Activated B cell treated with CpG ODN at 0.5 μM for 24 hours (primary cell): ENCODE measurements at regions of chr1 and their contacts with region 1.

Region 1: GRCh38 chr1:204506961-204507387 is 9.2 kb upstream of the MDM4 start:
- DNase-seq: peak; percentile 66
- ATAC-seq: peak; percentile 62
- H3K4me3 Mint-ChIP-seq: peak overlapping the region; percentile 91
- H3K27ac Mint-ChIP-seq: peak overlapping the region; percentile 99
- H3K4me1 Mint-ChIP-seq: peaks cover 74% of the 10 kb centered on the region
- H3K27me3 Mint-ChIP-seq: peaks cover 5% of the 10 kb centered on the region
- CTCF ChIP-seq: no peak

Region 2: GRCh38 chr1:204162231-204163074 is 344.5 kb before region 1 on chr1:
- CTCF ChIA-PET with region 1: interaction called, 3 read pairs
- POLR2A ChIA-PET with region 1: interaction called, 3 read pairs
- intact Hi-C with region 1: loop called (anchors 2 kb)
- DNase-seq: peak; percentile 71
- ATAC-seq: peak; percentile 98
- H3K4me3 Mint-ChIP-seq: no peak overlapping the region
- H3K27ac Mint-ChIP-seq: no peak overlapping the region
- H3K4me1 Mint-ChIP-seq: no peaks in the 10 kb centered on the region
- H3K27me3 Mint-ChIP-seq: peaks cover 20% of the 10 kb centered on the region
- CTCF ChIP-seq: peak; percentile 60

Region 3: GRCh38 chr1:204198151-204198994 is 308.6 kb before region 1 on chr1:
- CTCF ChIA-PET with region 1: no interaction called
- POLR2A ChIA-PET with region 1: no interaction called
- intact Hi-C with region 1: no loop called
- DNase-seq: no peak
- ATAC-seq: no peak
- H3K4me3 Mint-ChIP-seq: no peak overlapping the region
- H3K27ac Mint-ChIP-seq: no peak overlapping the region
- H3K4me1 Mint-ChIP-seq: no peaks in the 10 kb centered on the region
- H3K27me3 Mint-ChIP-seq: peaks cover 10% of the 10 kb centered on the region
- CTCF ChIP-seq: no peak

Region 4: DNA sequence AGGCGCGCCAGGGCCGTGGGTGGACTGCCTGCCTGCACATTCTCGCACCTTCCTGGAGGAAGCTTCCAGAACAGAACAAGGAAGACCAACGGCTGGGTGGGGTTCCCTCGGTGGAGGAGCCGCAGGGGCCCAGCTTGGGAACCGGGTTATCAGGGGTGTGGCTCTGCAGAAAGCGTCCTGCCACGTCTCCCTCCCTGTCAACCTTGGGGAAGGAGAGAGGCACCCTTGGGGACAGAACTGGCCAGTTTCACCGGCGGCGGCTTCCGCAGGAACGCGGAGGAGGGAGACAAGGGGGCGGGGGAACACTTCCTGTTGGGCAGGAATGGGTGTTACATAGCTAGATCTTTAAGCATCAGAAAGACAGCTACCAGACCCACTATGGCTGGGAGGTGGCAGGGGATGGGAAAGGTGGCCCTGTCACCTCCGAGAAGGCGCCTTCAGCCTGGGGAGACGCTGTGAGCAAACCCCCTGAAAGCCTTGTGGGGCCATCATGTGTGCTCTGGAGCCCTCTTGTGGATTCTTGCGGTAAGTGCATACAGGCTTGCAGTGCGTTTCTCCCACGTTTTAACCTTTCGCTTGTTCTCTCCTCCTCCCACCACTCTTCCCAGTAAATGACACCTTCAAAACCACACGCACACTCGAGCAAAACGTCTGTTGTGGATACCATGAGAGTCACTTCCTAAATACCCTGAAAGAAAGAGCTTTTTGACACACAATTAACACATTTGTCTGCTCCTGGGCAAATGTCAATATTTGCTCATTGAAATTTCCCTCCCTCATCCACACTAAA is 143.4 kb before region 1 on chr1:
- CTCF ChIA-PET with region 1: interaction called, 4 read pairs
- POLR2A ChIA-PET with region 1: no interaction called
- intact Hi-C with region 1: loop called (anchors 2 kb)
- DNase-seq: peak; percentile 54
- ATAC-seq: peak; percentile 91
- H3K4me3 Mint-ChIP-seq: peak overlapping the region; percentile 77
- H3K27ac Mint-ChIP-seq: no peak overlapping the region
- H3K4me1 Mint-ChIP-seq: peaks cover 3% of the 10 kb centered on the region
- H3K27me3 Mint-ChIP-seq: peaks cover 45% of the 10 kb centered on the region
- CTCF ChIP-seq: peak; percentile 19

Region 5: DNA sequence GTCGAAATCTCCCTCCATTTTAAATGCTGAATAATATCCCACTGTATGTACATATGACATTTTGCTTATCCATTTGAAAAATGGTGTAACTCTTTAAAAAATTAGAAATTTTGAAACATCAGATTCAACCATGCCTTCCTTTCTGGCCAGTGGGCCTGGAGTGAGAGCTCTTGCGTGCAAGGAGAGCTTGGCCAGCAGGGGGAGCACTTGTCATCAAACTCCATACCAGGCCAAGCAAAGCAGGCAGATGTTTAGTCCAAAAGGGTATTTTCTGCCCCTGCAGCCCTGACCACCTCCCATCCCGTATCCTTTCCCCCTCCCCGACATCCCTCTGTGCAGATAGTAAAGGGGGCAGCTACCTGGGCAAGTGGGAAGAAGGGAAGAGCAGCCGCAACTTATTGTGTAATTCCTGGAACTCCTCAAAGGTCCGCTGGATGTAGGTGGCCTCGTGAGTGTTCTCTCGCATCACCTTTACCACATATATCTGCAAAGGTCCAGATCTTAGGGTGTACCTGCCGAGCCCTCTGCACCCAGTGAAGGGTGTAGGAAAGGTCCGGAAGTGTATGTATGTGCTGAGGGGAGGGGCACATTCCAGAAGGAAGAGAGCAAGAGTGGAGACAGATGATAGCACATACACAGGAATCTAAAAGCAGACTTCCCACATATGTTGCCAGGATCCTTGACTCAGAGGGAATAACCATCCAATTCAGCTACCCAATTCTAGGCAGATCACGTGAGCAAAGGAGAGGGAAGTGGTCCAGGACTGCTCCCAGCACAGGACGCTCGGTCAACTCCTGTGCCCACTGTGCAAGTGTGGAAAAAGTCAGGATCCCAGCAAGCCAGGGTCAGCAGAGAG is 75.4 kb before region 1 on chr1:
- CTCF ChIA-PET with region 1: interaction called, 1,006 read pairs
- POLR2A ChIA-PET with region 1: interaction called, 18 read pairs
- intact Hi-C with region 1: loop called (anchors 1 kb)
- DNase-seq: peak; percentile 70
- ATAC-seq: peak; percentile 87
- H3K4me3 Mint-ChIP-seq: no peak overlapping the region
- H3K27ac Mint-ChIP-seq: peak overlapping the region; percentile 41
- H3K4me1 Mint-ChIP-seq: peaks cover 5% of the 10 kb centered on the region
- H3K27me3 Mint-ChIP-seq: no peaks in the 10 kb centered on the region
- CTCF ChIP-seq: peak; percentile 40

Region 6: DNA sequence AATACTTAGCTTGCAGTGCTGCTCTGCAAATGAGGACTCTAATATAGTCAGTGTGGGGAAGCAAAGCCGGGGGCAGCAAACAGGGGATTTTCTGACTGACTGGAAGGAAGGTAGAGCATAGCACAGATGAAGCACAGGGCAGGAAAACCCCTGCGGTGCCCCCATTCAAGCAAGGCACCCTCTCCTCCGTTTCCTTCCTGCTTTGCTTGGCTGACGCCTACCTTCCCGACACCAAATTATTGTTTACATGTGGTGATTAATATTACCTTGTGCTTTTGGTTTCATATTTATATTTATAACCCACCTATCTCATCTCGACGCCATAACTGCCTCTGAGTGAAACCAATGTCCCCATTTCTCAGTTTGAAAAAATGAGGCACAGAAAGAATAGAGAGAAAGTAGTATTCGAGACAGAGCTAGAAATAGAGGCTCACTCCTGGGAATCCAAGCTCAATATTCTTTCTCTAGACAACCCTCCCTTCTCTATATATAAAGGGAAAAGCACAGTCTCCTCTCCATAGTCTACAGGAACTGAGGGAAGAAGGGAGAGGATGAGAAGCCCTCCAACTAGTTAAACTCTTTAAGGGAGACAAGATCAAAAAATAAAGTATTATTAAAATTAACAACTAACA is 53.7 kb before region 1 on chr1:
- CTCF ChIA-PET with region 1: interaction called, 1,006 read pairs
- POLR2A ChIA-PET with region 1: interaction called, 72 read pairs
- intact Hi-C with region 1: no loop called
- DNase-seq: peak; percentile 54
- ATAC-seq: peak; percentile 90
- H3K4me3 Mint-ChIP-seq: peak overlapping the region; percentile 69
- H3K27ac Mint-ChIP-seq: peak overlapping the region; percentile 88
- H3K4me1 Mint-ChIP-seq: peaks cover 96% of the 10 kb centered on the region
- H3K27me3 Mint-ChIP-seq: no peaks in the 10 kb centered on the region
- CTCF ChIP-seq: no peak

Region 7: GRCh38 chr1:204480515-204480914 is 26.5 kb before region 1 on chr1:
- CTCF ChIA-PET with region 1: interaction called, 19 read pairs
- POLR2A ChIA-PET with region 1: interaction called, 19 read pairs
- intact Hi-C with region 1: loop called (anchors 1 kb)
- DNase-seq: peak; percentile 40
- ATAC-seq: peak; percentile 57
- H3K4me3 Mint-ChIP-seq: peak overlapping the region; percentile 76
- H3K27ac Mint-ChIP-seq: peak overlapping the region; percentile 98
- H3K4me1 Mint-ChIP-seq: peaks cover 98% of the 10 kb centered on the region
- H3K27me3 Mint-ChIP-seq: no peaks in the 10 kb centered on the region
- CTCF ChIP-seq: no peak

Region 8: GRCh38 chr1:204523605-204524215 is 16.7 kb after region 1 on chr1:
- CTCF ChIA-PET with region 1: interaction called, 16 read pairs
- POLR2A ChIA-PET with region 1: interaction called, 15 read pairs
- intact Hi-C with region 1: loop called (anchors 1 kb)
- DNase-seq: no peak
- ATAC-seq: peak; percentile 32
- H3K4me3 Mint-ChIP-seq: peak overlapping the region; percentile 66
- H3K27ac Mint-ChIP-seq: peak overlapping the region; percentile 90
- H3K4me1 Mint-ChIP-seq: peaks cover 61% of the 10 kb centered on the region
- H3K27me3 Mint-ChIP-seq: no peaks in the 10 kb centered on the region
- CTCF ChIP-seq: no peak

Region 9: DNA sequence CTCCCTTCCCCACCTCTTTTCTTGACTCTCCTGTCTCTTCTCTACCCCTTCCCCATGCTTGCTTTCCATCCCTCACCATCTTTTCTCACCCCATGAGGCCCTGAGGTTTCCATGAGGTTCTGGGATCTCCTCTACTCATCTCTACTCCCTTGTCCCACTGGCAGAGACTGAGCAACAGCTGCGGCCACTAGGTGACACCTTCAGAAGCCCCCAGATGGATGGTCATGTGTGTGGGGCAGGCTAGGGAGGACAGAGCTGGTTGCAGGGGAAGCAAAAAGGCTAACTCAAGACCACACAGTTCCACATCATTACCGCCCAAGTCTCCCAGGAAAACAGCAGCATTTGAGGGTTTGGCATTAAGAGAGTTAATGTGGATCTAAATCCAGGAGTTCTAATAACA is 133.6 kb after region 1 on chr1:
- CTCF ChIA-PET with region 1: no interaction called
- POLR2A ChIA-PET with region 1: no interaction called
- intact Hi-C with region 1: no loop called
- DNase-seq: no peak
- ATAC-seq: no peak
- H3K4me3 Mint-ChIP-seq: no peak overlapping the region
- H3K27ac Mint-ChIP-seq: no peak overlapping the region
- H3K4me1 Mint-ChIP-seq: no peaks in the 10 kb centered on the region
- H3K27me3 Mint-ChIP-seq: peaks cover 21% of the 10 kb centered on the region
- CTCF ChIP-seq: no peak

Region 10: DNA sequence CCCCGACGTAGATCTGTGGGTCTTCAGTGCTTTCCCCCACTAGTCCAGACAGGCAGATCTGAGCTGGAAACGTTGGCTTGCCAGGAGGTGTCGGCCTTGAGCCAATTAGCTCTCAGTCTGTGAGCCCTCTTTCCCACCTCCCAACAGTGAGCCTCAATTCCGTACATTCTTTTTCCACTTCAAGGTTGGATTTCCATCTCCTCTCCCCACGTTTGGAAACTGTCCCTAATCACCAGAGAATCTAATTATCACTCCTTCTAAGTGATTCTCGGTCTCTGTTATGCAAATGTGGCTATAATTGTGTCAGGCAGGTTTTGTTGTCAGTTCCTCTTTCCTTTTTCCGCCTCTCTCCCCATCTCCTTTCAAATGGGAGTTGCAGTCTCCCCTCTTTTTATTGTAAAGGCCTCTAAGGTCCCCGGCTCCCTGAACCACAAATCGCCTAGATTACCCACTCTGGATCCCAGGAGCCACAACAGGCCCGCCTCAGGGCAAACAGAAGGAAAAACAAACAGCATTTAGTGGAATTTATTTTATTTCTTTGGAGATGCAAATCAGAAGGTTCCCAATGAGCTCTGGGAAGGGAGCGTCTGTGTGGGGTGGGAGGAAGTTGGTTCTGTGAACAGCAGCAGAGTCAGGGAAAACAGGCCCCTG is 208.0 kb after region 1 on chr1:
- CTCF ChIA-PET with region 1: no interaction called
- POLR2A ChIA-PET with region 1: no interaction called
- intact Hi-C with region 1: no loop called
- DNase-seq: no peak
- ATAC-seq: no peak
- H3K4me3 Mint-ChIP-seq: peak overlapping the region; percentile 64
- H3K27ac Mint-ChIP-seq: no peak overlapping the region
- H3K4me1 Mint-ChIP-seq: peaks cover 35% of the 10 kb centered on the region
- H3K27me3 Mint-ChIP-seq: peaks cover 28% of the 10 kb centered on the region
- CTCF ChIP-seq: no peak

Region 11: DNA sequence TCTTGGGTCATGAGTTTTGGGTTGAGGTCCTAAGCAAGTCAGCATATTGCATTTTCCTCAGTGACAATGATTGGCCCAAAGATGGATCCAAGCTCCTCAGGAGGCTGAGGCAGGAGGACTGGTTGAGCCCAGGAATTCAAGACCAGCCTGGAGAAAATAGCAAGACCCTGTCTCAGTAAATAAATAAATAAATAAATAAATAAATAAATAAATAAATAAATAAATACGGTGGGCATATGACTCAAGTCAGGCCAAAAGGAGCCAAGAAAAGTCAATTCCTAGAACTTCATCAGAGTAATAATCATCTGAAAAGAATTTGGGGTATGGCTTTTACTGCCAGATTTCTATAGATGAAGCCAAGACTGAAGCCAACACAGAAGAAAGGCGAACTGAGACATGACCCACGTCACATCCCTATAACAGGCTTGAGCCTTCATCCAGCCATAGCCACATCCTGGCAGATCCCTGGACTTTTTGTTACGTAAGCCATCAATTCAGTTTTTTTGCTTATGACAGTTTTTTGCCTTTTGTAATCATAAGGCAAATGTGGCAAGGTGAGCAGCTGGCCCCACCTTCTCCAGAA is 275.2 kb after region 1 on chr1:
- CTCF ChIA-PET with region 1: no interaction called
- POLR2A ChIA-PET with region 1: no interaction called
- intact Hi-C with region 1: no loop called
- DNase-seq: no peak
- ATAC-seq: no peak
- H3K4me3 Mint-ChIP-seq: no peak overlapping the region
- H3K27ac Mint-ChIP-seq: no peak overlapping the region
- H3K4me1 Mint-ChIP-seq: no peaks in the 10 kb centered on the region
- H3K27me3 Mint-ChIP-seq: peaks cover 22% of the 10 kb centered on the region
- CTCF ChIP-seq: no peak